PC-3 (cell line): ENCODE measurements at regions of chr22 and their contacts with region 1.

Region 1: GRCh38 chr22:28798817-28799605 is 1.4 kb downstream of the XBP1 start:
- DNase-seq: peak; percentile 53
- ATAC-seq: peak; percentile 11
- H3K4me3 ChIP-seq: peak overlapping the region; percentile 97
- H3K27ac ChIP-seq: peak overlapping the region; percentile 89
- H3K4me1 ChIP-seq: peaks cover 14% of the 10 kb centered on the region
- H3K27me3 ChIP-seq: no peaks in the 10 kb centered on the region
- CTCF ChIP-seq: no peak

Region 2: GRCh38 chr22:28772633-28773460 is 26.2 kb before region 1 on chr22 and contains the start of gene CCDC117:
- CTCF ChIA-PET with region 1: no interaction called
- POLR2A ChIA-PET with region 1: interaction called, 12 read pairs
- intact Hi-C with region 1: no loop called
- DNase-seq: peak; percentile 79
- ATAC-seq: peak; percentile 90
- H3K4me3 ChIP-seq: peak within 1 kb of the TSS; percentile 73
- H3K27ac ChIP-seq: peak within 1 kb of the TSS; percentile 8; the same call in 1 of the 2 replicates
- H3K4me1 ChIP-seq: peaks cover 4% of the 10 kb centered on the region; the same call in 1 of the 2 replicates
- H3K27me3 ChIP-seq: no peaks in the 10 kb centered on the region
- CTCF ChIP-seq: no peak
- total RNA-seq, gene CCDC117: 7.1 and 18.8 TPM in 2 replicates